PC-9 (cell line): ENCODE measurements at regions of chr3 and their contacts with region 1.

Region 1: DNA sequence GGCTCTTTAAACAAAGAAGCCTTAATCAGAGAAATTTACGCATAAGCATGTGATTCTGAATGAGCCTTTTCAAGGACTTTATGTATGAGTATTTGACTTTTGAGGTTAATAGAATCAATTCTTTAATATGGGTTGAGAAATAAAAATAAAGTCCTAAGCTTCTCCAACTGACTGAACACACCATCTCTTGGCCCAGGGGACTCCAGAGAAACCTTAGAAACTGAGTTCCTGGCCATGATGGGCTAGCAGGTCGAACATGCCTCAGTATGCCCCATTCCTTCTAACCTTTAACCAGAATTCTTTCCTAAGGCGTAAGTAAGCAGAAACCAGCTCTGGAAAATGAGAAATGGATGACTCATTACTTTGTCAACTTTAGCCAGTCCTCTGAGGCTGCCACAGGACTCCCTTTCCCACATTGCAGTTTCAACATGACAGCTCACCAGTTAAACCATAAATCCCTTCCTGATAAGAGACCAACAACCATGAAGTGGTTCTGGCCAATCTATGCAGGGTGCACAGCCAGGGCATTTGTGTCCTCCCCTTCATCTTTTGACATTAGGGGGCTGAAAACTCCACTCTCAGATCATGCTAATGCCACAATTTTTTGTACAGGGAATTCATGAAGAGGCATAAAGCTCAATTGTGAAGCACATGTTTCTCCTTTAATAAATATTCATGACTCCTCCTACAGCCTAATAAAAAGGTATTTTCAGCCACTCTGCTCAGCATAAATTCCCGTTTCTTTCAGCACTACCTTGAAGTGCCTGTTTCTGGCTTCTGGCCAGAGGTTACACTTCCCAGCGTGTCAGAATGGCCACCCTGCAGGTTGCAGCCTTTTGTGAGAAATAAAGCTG is 33.3 kb downstream of the TM4SF18 start:
- DNase-seq: peak; percentile 76 to 99
- H3K4me3 ChIP-seq: peak overlapping the region; percentile 42; the same call in 1 of the 2 replicates
- H3K27ac ChIP-seq: peak overlapping the region; percentile 100
- H3K4me1 ChIP-seq: peaks cover 55% of the 10 kb centered on the region
- H3K27me3 ChIP-seq: no peaks in the 10 kb centered on the region
- CTCF ChIP-seq: no peak

Region 2: DNA sequence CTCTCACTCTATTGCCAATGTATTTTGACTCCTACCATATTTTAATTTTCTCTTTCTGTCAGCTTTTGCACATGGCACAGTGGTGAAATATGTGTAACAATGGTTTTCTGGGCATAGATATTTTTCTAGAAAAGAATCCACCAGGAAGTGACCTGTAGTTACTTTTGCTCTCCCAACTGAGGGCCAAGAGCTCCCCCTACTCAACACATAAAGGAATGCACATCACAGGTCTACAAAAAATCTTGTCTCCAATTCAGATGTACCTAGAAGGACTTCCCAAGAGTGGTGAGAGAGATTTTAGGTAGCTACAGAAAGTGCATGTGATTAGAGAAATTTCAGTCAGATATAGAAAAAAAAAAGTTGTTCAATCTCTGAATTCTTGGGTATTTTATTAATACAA is 419.5 kb before region 1 on chr3:
- CTCF ChIA-PET with region 1: no interaction called
- POLR2A ChIA-PET with region 1: no interaction called
- intact Hi-C with region 1: no loop called
- DNase-seq: no peak
- H3K4me3 ChIP-seq: no peak overlapping the region
- H3K27ac ChIP-seq: no peak overlapping the region
- H3K4me1 ChIP-seq: no peaks in the 10 kb centered on the region
- H3K27me3 ChIP-seq: no peaks in the 10 kb centered on the region
- CTCF ChIP-seq: peak; percentile 43; the same call in 1 of the 2 replicates

Region 3: GRCh38 chr3:149314807-149315578 is 14.8 kb after region 1 on chr3:
- CTCF ChIA-PET with region 1: interaction called, 3 read pairs
- POLR2A ChIA-PET with region 1: interaction called, 9 read pairs
- intact Hi-C with region 1: loop called (anchors 1 kb)
- DNase-seq: peak; percentile 29 to 70
- H3K4me3 ChIP-seq: no peak overlapping the region
- H3K27ac ChIP-seq: peak overlapping the region; percentile 73
- H3K4me1 ChIP-seq: peaks cover 45% of the 10 kb centered on the region
- H3K27me3 ChIP-seq: no peaks in the 10 kb centered on the region
- CTCF ChIP-seq: no peak

Region 4: GRCh38 chr3:149366941-149367840 is 67.0 kb after region 1 on chr3:
- CTCF ChIA-PET with region 1: interaction called, 9 read pairs
- POLR2A ChIA-PET with region 1: interaction called, 4 read pairs
- intact Hi-C with region 1: loop called (anchors 1 kb)
- DNase-seq: peak; percentile 86 to 99
- H3K4me3 ChIP-seq: 0 out of 2 replicates have a peak overlapping the region, but pooled peaks have one; percentile 6
- H3K27ac ChIP-seq: peak overlapping the region; percentile 99
- H3K4me1 ChIP-seq: peaks cover 63% of the 10 kb centered on the region
- H3K27me3 ChIP-seq: no peaks in the 10 kb centered on the region
- CTCF ChIP-seq: no peak